ENCODE measurements at regions of chr16 and their contacts with region 1.

Region 1: GRCh38 chr16:21300309-21301167 is 22.4 kb upstream of the CRYM start:
- DNase-seq: peak; percentile 95 to 98
- ATAC-seq: peak; percentile 79

Region 2: DNA sequence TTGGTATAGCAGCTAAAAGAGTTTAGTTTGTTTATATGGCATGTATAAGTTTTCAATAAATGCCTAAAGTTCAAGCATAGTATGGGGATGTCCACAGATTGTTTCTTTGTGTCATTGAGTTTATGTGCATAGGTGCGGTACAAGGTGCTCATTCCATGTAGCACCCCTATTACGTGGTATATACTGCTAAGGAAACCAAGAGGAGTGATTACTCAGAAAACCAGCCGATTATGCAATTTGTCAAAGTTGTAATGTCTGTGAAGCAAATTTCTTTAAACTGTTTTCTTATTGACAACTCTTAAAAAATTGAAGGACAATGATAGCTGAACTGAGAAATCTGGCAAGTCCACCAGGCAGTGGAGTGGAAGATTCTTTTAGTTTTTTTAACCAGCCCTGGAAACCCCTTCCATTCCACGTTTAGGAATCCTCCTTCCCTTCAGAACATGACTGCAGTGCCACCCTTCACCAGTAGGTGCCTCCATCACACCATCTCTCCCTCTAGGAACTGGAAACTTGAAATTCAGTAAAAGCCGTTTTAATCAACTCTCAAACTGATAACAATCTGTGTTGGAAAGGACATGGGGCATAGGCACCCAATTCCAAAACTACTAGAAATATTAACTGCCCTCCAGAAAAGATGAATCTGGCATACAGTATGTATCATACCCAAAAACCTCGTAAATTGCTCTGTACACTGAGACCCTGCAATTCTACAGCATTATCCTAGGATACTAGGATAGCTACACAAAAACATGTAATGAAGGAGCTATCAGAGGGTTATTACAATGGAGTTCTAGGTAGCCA is 450.7 kb before region 1 on chr16:
- intact Hi-C with region 1: loop called in 1 of 2 experiments (anchors 10 kb)
- DNase-seq: peak; percentile 46 to 78
- ATAC-seq: peak; percentile 74

Region 3: GRCh38 chr16:21101631-21102420 is 198.7 kb before region 1 on chr16:
- intact Hi-C with region 1: no loop called
- DNase-seq: peak in 1 of 2 donors; percentile 16
- ATAC-seq: peak; percentile 42

Region 4: GRCh38 chr16:21158208-21159110 is 142.1 kb before region 1 on chr16 and contains the start of gene LDAF1:
- intact Hi-C with region 1: loop called in 1 of 2 experiments (anchors 10 kb)
- DNase-seq: peak; percentile 87 to 92
- ATAC-seq: peak; percentile 94
- total RNA-seq, gene LDAF1: 35.1 to 58.9 TPM

Region 5: GRCh38 chr16:21169249-21169981 is 131.1 kb before region 1 on chr16:
- intact Hi-C with region 1: no loop called
- DNase-seq: no peak
- ATAC-seq: no peak

Region 6: DNA sequence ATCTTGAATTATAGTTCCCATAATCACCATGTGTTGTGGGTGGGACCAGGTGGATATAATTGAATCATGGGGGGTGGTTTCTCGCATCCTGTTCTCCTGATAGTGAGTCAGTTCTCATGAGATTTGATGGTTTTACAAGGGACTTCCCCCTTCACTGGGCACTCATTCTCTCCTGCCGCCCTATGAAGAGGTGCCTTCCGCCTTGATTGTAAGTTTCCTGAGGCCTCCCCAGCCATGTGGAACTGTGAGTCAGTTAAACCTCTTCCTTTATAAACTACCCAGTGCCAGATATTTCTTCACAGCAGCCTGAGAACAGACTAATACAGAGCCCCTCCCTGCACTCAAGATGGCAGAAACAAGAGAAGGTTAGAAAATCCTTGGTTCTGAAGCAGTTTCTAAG is 115.7 kb before region 1 on chr16:
- intact Hi-C with region 1: loop called in 1 of 2 experiments (anchors 10 kb)
- DNase-seq: no peak
- ATAC-seq: peak; percentile 5

Region 7: GRCh38 chr16:21197112-21197511 is 103.4 kb before region 1 on chr16:
- intact Hi-C with region 1: no loop called
- DNase-seq: no peak
- ATAC-seq: no peak